ENCODE measurements at regions of chr19 and their contacts with region 1.

Region 1: GRCh38 chr19:40465557-40466150 is at the start of gene BLVRB:
- DNase-seq: peak; percentile 98
- ATAC-seq: peak; percentile 88
- H3K4me3 ChIP-seq: peak within 1 kb of the TSS; percentile 93 to 95
- H3K27ac ChIP-seq: peak within 1 kb of the TSS; percentile 89
- H3K4me1 ChIP-seq: peaks cover 13 to 34% of the 10 kb centered on the region in 2 experiments
- H3K27me3 ChIP-seq: no peaks in the 10 kb centered on the region
- CTCF ChIP-seq: no peak
- POLR2A ChIP-seq: no peak
- RAD21 ChIP-seq: no peak
- total RNA-seq, gene BLVRB: 113 TPM

Region 2: DNA sequence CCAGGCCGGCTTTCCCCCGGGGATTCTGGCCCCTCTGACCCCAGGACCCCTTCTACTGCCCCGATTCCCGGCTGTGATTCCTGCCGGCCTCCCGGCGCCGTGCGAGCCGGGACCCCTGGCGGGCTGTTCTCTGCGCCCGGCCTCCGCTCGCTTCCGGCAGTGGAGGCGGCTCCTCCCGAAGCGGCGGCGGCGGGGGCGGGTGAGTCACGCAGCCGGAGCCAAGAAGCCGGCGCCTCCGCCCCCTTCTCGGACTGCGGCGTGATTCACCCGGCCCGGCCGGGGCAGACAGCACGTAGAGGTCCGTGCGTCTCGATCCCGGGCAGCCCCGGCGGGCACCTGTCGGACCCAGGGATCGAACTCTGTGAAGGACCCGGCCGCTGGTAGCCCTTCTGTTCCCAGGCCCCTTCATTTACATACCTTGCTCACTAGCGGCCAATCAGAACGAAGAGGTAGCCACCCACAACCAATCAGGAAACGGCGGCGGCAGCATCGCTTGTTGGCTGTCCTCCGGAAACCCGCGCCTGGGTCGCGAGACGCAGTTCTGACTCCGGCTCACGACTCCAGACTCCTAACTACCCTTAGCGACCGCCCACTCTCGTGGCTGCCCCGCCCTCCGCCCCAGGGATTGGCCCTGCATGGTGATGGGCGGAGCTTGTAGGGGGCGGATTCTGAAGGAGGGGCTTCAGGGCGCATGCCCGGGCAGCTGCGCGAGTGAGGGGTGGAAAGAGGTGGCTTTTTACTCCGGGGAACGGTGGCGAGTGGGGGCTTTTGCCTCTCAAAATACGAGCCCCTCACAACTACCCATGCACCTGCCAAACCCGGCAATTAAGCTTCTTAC is 40.0 kb before region 1 on chr19 and contains the start of gene SERTAD1:
- CTCF ChIA-PET with region 1: interaction called, 21 read pairs
- POLR2A ChIA-PET with region 1: interaction called, 21 read pairs
- RAD21 ChIA-PET with region 1: interaction called, 3 to 5 read pairs
- intact Hi-C with region 1: no loop called
- DNase-seq: peak; percentile 98
- ATAC-seq: peak; percentile 79
- H3K4me3 ChIP-seq: peak within 1 kb of the TSS; percentile 65 to 84
- H3K27ac ChIP-seq: peak within 1 kb of the TSS; percentile 98
- H3K4me1 ChIP-seq: peaks cover 27 to 57% of the 10 kb centered on the region in 2 experiments
- H3K27me3 ChIP-seq: no peaks in the 10 kb centered on the region
- CTCF ChIP-seq: peak; percentile 23 to 82 (median 75); a peak in 5 of 6 replicates
- POLR2A ChIP-seq: peak; percentile 97
- RAD21 ChIP-seq: peak; percentile 36
- total RNA-seq, gene SERTAD1: 30.3 TPM

Region 3: DNA sequence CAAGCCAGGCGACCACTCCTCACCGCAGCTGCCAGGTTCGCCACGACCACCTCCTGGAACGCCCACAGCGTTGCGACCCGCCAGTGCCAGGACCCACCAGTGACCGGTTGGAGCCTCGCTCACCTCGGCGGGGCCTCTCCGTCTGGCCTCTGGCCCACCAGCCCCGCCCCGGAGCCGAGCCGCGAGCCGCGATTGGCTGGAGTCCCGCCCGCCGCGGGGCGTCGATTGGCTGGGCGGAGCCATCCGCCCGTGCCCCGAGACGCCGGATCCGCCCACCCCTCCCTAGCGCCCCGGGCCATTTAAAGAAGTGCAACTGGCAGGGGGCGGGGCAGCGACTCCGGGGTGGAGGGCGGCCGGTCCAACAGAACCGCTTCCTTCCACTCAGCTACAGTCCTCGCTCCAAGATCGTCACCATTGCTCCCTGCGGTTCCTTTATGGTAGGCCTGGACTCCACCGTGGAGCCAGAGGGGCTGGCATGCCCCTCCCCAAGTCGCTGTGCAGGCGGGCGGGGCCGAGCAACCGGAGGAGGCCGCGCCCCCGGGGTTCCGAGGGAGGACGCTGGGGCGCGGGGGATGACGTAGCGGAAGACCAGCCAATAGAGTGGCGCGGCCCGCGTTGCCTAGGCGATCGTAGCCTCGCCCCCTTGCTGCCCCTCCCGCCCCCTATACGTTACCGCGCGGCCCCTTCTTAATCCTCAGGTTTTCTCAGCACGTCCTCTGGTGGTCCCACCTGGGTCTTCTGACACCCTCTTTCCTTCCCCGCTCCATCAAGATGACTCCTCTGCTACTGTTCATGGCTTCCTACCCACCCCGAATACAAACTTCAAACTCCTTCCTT is 21.2 kb before region 1 on chr19 and contains the start of gene SERTAD3:
- CTCF ChIA-PET with region 1: interaction called, 9 read pairs
- POLR2A ChIA-PET with region 1: interaction called, 24 read pairs
- RAD21 ChIA-PET with region 1: interaction called in 1 of 2 experiments, 7 read pairs
- intact Hi-C with region 1: no loop called
- DNase-seq: peak; percentile 85
- ATAC-seq: peak; percentile 75
- H3K4me3 ChIP-seq: peak within 1 kb of the TSS; percentile 71 to 100
- H3K27ac ChIP-seq: peak within 1 kb of the TSS; percentile 97
- H3K4me1 ChIP-seq: peaks cover 20 to 31% of the 10 kb centered on the region in 2 experiments
- H3K27me3 ChIP-seq: no peaks in the 10 kb centered on the region
- CTCF ChIP-seq: 0 out of 6 replicates have a peak, but pooled peaks of 1 of the 3 experiments have one; percentile 12
- POLR2A ChIP-seq: peak; percentile 71
- RAD21 ChIP-seq: peak; percentile 39
- total RNA-seq, gene SERTAD3: 32.4 TPM

Region 4: DNA sequence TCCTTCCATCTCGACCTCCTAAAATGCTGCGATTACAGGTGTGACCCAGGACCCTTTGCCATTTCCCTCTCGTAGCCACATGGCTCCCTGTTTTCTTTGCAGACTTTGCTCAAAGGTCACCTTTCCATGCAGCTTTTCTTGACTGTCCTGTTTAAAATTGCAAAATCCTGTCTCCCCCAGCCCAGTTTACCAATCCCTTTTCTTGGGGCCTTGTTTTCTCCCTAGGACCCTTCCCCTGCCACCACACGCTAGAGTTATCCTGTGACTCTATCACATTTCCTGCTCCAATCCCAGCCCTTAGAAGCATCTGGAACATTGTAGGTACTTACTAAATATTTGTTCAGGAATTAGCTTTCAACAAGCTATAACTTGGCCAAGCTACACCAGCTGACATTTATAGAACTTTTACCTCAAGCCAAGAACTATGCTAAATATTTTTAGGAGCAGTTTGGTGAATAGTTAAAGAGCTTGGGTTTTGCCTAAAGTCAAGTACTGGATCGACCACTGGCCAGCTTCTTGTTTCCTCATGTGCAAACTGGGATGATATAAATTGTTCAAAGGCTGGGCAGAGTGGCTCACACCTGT is 12.4 kb before region 1 on chr19:
- CTCF ChIA-PET with region 1: interaction called, 4 read pairs
- POLR2A ChIA-PET with region 1: interaction called, 19 read pairs
- RAD21 ChIA-PET with region 1: interaction called in 1 of 2 experiments, 4 read pairs
- intact Hi-C with region 1: no loop called
- DNase-seq: no peak
- ATAC-seq: no peak
- H3K4me3 ChIP-seq: no peak overlapping the region
- H3K27ac ChIP-seq: no peak overlapping the region
- H3K4me1 ChIP-seq: peaks cover 5 to 7% of the 10 kb centered on the region in 2 experiments; a peak in 3 of 4 replicates
- H3K27me3 ChIP-seq: no peaks in the 10 kb centered on the region
- CTCF ChIP-seq: no peak
- POLR2A ChIP-seq: no peak
- RAD21 ChIP-seq: no peak

Region 5: GRCh38 chr19:40682431-40682964 is 216.8 kb after region 1 on chr19:
- CTCF ChIA-PET with region 1: no interaction called
- POLR2A ChIA-PET with region 1: no interaction called
- RAD21 ChIA-PET with region 1: no interaction called
- intact Hi-C with region 1: no loop called
- DNase-seq: no peak
- ATAC-seq: no peak
- H3K4me3 ChIP-seq: no peak overlapping the region
- H3K27ac ChIP-seq: no peak overlapping the region
- H3K4me1 ChIP-seq: no peaks in the 10 kb centered on the region
- H3K27me3 ChIP-seq: no peaks in the 10 kb centered on the region
- CTCF ChIP-seq: no peak
- POLR2A ChIP-seq: no peak
- RAD21 ChIP-seq: no peak